ENCODE measurements at regions of chr2 and their contacts with region 1.

Region 1: GRCh38 chr2:74845217-74846011 is 11.5 kb downstream of the HK2 start:
- DNase-seq: no peak
- H3K4me3 Mint-ChIP-seq: peak overlapping the region; percentile 43
- H3K27ac Mint-ChIP-seq: peak overlapping the region; percentile 47
- H3K4me1 Mint-ChIP-seq: peaks cover 88% of the 10 kb centered on the region
- H3K27me3 Mint-ChIP-seq: no peaks in the 10 kb centered on the region

Region 2: DNA sequence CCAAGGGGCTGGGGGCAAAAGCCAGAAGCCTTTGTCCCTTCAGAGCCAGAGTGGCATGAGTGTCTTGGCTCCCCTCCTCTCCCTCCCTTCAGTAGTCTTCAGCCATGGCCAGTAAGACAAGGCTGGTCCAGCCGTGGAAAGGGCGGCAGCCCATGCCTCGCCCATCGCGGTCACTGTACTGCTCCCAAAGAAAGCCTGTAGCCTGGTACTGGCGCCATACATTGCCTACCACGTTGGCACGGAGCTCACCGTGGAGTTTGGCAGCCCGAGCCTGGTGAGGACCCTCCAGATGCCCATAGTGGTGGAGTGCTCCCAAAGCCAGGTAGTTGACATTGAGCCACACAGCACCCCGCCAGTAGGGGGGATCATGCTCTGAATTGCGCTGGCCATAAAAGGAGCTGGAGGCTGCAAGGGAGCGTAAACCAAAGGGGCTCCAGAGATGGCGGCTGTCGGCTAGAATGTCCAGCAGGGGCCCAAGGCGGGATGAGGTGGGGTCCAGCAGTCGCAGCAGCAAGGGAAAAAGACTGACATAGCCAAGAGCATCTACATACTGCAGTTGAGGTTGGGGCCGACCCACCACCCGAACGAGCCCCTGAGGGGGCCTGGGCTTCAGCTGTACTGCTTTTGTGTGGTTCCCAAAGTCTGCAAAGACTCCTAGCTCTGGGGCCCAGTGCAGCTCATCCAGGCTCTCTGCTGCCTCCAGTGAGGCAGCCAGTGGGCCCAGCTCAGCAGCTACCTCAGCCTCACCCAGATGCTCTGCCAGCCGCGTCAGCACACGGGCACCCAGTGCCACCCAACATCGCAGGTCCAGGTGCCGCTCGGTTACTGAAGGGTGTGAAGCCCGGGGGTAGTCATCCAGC is 384.0 kb before region 1 on chr2:
- intact Hi-C with region 1: no loop called
- DNase-seq: no peak
- H3K4me3 Mint-ChIP-seq: no peak overlapping the region
- H3K27ac Mint-ChIP-seq: no peak overlapping the region
- H3K4me1 Mint-ChIP-seq: peaks cover 17% of the 10 kb centered on the region
- H3K27me3 Mint-ChIP-seq: no peaks in the 10 kb centered on the region

Region 3: DNA sequence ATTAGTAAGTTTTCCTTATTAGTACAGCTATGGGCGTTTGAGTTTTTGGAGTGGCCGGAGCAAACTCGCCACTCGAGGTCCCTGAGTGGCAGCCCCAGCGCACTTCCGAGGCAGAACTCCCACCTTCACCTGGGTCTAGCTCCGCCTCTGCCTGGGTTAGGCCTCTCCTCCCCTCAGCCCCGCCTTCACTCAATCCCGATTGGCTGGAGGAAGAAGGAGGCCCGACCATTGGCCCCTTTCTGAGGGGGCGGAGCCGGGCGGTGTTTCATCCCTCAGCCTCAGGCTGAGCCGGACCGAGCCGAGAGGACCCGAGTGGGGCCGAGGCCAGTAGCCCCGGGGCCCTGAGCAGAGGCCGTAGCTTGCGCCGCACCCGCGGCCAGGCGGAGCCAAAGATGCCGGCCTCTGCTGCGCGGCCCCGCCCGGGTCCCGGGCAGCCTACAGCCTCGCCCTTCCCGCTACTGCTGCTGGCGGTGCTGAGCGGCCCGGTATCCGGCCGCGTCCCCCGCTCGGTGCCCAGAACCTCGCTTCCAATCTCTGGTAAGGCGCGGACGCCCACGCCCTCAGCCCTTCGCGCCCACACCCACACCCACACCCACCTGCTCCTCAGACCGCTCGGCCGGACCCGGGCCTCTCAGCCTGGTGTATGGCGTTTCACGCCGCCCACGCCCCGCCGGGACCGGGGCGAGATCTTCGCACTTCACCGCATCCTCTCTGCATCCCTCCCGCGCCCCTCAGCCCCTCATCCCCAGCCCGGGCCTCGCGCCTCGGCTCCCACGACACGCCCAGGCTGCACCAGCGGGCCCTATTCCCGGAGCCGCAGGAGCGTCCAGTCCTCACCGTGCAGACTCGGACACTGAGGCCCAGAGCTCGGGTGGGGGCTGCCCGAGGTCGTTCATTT is 191.2 kb before region 1 on chr2 and contains the start of gene SEMA4F:
- intact Hi-C with region 1: loop called (anchors 5 kb)
- DNase-seq: peak; percentile 90
- H3K4me3 Mint-ChIP-seq: peak within 1 kb of the TSS; percentile 77
- H3K27ac Mint-ChIP-seq: peak within 1 kb of the TSS; percentile 1
- H3K4me1 Mint-ChIP-seq: peaks cover 20% of the 10 kb centered on the region
- H3K27me3 Mint-ChIP-seq: peaks cover 17% of the 10 kb centered on the region
- total RNA-seq, gene SEMA4F: 5.5 and 7.1 TPM in 2 replicates

Region 4: GRCh38 chr2:74715078-74715791 is 130.2 kb before region 1 on chr2:
- intact Hi-C with region 1: loop called (anchors 5 kb)
- DNase-seq: peak; percentile 75
- H3K4me3 Mint-ChIP-seq: peak overlapping the region; percentile 83
- H3K27ac Mint-ChIP-seq: no peak overlapping the region
- H3K4me1 Mint-ChIP-seq: peaks cover 8% of the 10 kb centered on the region
- H3K27me3 Mint-ChIP-seq: peaks cover 20% of the 10 kb centered on the region

Region 5: GRCh38 chr2:74725287-74725686 is 120.1 kb before region 1 on chr2:
- intact Hi-C with region 1: no loop called
- DNase-seq: no peak
- H3K4me3 Mint-ChIP-seq: no peak overlapping the region
- H3K27ac Mint-ChIP-seq: no peak overlapping the region
- H3K4me1 Mint-ChIP-seq: no peaks in the 10 kb centered on the region
- H3K27me3 Mint-ChIP-seq: peaks cover 22% of the 10 kb centered on the region

Region 6: DNA sequence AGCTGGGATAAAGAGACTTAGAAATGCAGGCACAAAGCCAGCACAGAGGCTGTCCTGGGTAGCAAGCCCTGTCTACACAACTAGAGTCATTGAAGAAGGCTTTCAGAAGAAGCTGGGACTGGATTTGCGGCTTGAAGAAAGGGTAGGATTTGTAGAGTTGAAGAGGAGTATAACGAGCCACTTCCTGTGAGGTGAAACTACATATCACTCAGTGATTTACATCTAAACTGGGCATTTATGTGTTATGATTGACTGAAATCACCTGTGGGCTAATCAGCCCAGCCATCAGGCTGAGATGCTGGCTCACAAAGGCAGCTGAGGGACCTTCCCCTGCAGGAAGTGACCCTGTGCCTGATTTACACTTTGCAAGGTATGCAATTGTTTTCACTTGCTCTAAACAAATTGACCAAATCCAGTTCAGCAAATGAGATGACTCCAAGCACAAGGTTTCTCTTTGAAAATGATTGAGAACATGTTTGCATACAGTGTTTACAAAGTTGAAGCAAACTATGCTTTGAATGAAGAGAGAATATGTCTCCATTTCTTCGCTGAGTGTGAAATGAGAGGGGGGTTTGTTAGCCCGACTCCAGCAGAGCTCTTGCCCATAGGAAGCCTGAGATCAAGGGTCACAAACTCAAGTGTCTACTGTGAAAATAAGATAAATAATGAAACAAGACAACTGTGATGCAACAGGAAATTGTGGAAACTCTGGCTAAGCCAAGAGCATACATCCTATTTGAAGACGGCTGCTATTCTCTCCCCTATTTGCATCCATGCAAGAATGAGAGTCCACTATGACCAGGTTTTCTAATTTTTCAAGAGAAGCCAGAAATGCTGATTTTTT is 80.8 kb before region 1 on chr2:
- intact Hi-C with region 1: no loop called
- DNase-seq: no peak
- H3K4me3 Mint-ChIP-seq: no peak overlapping the region
- H3K27ac Mint-ChIP-seq: no peak overlapping the region
- H3K4me1 Mint-ChIP-seq: peaks cover 17% of the 10 kb centered on the region
- H3K27me3 Mint-ChIP-seq: no peaks in the 10 kb centered on the region

Region 7: DNA sequence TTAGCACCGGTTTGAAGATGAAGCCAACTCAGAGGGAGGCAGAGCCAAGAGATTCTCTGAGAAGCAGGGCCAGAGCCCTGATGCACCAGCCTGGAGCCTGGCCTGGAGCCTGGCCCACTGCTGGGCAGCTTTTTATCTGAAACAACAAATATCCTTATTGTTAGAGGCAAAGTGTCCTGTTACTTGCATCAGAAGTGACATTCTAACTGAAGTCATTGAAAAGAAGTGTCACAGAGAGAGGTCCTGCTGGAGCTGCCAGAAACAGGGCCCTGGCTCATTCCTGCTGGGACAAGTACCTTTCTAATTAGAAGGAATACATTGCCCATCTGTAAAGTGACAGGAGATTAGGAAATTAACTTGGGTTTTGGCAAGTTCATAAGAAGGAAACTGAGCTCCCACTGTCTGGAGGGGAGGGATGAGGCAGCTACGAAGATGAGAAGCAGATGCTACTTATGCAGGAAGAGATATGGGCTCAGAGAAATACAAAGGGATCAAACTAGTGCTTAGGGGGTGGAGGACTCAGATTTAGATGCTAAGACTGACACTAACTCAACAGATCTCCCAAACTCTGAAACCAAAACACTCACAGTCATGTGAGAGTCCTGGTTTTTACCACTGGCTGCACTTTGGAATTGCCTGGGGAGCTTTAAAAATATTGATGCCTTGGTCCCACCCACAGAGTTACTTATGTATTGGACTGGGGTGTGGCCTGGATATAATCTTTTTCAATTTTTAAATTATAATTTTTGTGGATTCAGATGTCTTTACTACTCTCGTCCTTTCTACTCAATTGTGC is 22.4 kb before region 1 on chr2:
- intact Hi-C with region 1: no loop called
- DNase-seq: no peak
- H3K4me3 Mint-ChIP-seq: no peak overlapping the region
- H3K27ac Mint-ChIP-seq: no peak overlapping the region
- H3K4me1 Mint-ChIP-seq: peaks cover 6% of the 10 kb centered on the region
- H3K27me3 Mint-ChIP-seq: peaks cover 13% of the 10 kb centered on the region

Region 8: GRCh38 chr2:74858281-74858680 is 12.9 kb after region 1 on chr2:
- intact Hi-C with region 1: loop called (anchors 2 kb)
- DNase-seq: no peak
- H3K4me3 Mint-ChIP-seq: no peak overlapping the region
- H3K27ac Mint-ChIP-seq: peak overlapping the region; percentile 24
- H3K4me1 Mint-ChIP-seq: peaks cover 33% of the 10 kb centered on the region
- H3K27me3 Mint-ChIP-seq: no peaks in the 10 kb centered on the region

Region 9: DNA sequence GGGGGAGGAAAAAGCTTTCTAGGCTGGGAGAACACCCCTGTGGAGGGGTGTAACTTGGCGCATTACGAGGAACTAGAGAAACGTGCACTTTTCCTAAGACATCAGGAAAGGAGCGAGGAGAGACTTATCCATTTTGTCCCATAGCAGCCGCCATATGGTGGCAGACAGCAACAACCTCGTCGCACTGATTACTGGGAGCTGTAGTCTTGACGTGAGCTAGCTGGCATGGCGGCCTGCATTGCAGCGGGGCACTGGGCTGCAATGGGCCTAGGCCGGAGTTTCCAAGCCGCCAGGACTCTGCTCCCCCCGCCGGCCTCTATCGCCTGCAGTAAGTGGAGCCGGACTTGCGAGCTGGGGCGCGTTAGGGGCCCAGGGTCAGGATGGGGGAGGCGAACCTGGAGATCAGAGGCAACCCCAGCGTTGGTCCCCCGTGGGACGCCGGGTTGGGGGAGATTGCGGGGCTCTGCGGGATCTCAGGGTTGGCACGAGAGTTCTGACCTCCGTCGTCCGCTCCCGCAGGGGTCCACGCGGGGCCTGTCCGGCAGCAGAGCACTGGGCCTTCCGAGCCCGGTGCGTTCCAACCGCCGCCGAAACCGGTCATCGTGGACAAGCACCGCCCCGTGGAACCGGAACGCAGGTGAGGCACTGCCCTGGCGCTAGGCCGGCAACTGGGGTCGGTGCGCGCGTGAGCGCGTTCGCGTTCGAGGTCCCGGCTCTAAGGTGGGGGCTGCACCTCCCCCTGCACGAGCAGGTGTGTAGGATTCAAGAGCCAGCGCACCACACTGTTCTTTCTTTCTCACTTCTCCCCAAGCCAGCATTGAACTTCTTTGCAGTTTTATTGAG is 801.4 kb after region 1 on chr2 and contains the start of gene MRPL19:
- intact Hi-C with region 1: loop called (anchors 10 kb)
- DNase-seq: peak; percentile 71
- H3K4me3 Mint-ChIP-seq: peak within 1 kb of the TSS; percentile 91
- H3K27ac Mint-ChIP-seq: peak within 1 kb of the TSS; percentile 94
- H3K4me1 Mint-ChIP-seq: peaks cover 14% of the 10 kb centered on the region
- H3K27me3 Mint-ChIP-seq: no peaks in the 10 kb centered on the region
- total RNA-seq, gene MRPL19: 67.7 and 73.5 TPM in 2 replicates